ENCODE measurements at regions of chr17 and their contacts with region 1.

Region 1: DNA sequence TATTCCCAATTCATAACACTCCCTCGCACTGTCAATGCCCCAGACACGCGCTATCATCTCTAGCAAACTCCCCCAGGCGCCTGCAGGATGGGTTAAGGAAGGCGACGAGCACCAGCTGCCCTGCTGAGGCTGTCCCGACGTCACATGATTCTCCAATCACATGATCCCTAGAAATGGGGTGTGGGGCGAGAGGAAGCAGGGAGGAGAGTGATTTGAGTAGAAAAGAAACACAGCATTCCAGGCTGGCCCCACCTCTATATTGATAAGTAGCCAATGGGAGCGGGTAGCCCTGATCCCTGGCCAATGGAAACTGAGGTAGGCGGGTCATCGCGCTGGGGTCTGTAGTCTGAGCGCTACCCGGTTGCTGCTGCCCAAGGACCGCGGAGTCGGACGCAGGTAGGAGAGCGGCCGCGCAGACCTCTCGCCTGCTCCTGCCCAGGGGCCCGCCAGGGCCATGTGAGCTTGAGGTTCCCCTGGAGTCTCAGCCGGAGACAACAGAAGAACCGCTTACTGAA is at the start of gene GRN:
- DNase-seq: peak; percentile 95
- ATAC-seq: peak; percentile 99
- H3K4me3 Mint-ChIP-seq: peak within 1 kb of the TSS; percentile 85
- H3K27ac Mint-ChIP-seq: peak within 1 kb of the TSS; percentile 95
- H3K4me1 Mint-ChIP-seq: peaks cover 8% of the 10 kb centered on the region
- H3K27me3 Mint-ChIP-seq: peaks cover 20% of the 10 kb centered on the region
- CTCF ChIP-seq: no peak
- total RNA-seq, gene GRN: 177 to 185 TPM (median 185 TPM) in 3 replicates

Region 2: DNA sequence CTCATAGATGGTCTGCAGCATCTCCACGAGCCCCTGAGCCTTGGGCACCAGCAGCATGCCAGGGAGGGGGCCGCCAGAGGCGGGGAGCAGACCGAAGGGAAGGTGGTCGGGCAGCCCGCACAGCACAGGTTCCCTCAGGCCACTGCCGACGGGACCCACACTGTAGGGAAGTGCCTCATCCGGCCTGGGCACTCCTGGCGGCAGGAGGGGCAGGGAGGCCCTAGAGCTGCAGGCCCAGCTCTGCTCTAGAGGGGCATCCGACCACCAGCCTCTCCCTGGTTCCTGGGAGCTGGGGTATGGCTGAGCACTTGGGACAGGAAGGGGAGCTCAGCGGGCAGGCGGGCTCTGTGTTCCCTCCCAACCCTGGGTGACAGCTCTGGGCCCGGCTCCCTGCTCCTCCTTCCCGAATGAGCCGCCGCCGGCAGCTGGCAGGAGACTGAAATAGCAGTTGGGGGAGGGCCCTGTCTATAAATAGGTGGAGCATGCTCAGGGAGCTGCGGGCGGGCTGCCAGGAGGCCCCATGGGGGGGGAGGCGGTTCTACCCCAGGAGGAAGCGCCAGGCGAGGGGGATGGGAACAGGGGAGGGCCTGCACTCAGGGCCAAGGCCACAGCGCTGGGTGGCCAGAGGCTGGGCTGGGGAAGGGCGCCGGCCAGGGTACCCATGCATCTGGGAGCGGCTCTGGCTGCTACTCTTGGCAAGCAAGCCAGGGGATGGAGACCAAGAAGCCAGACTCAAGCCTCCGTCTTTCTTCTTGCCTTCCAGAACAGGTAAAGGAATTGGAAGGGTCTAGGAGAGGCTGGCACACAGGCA is 234.0 kb before region 1 on chr17:
- CTCF ChIA-PET with region 1: interaction called, 10 read pairs
- POLR2A ChIA-PET with region 1: no interaction called
- DNase-seq: peak; percentile 82
- ATAC-seq: peak; percentile 75
- H3K4me3 Mint-ChIP-seq: peak overlapping the region; percentile 49
- H3K27ac Mint-ChIP-seq: no peak overlapping the region
- H3K4me1 Mint-ChIP-seq: peaks cover 48% of the 10 kb centered on the region
- H3K27me3 Mint-ChIP-seq: no peaks in the 10 kb centered on the region
- CTCF ChIP-seq: no peak

Region 3: GRCh38 chr17:44199553-44200477 is 145.2 kb before region 1 on chr17 and contains the start of gene ATXN7L3:
- CTCF ChIA-PET with region 1: interaction called, 26 read pairs
- POLR2A ChIA-PET with region 1: no interaction called
- DNase-seq: peak; percentile 100
- ATAC-seq: peak; percentile 87
- H3K4me3 Mint-ChIP-seq: peak within 1 kb of the TSS; percentile 85
- H3K27ac Mint-ChIP-seq: peak within 1 kb of the TSS; percentile 98
- H3K4me1 Mint-ChIP-seq: peaks cover 24% of the 10 kb centered on the region
- H3K27me3 Mint-ChIP-seq: no peaks in the 10 kb centered on the region
- CTCF ChIP-seq: no peak
- total RNA-seq, gene ATXN7L3: 113 to 124 TPM (median 114 TPM) in 3 replicates

Region 4: GRCh38 chr17:44218344-44219107 is 126.5 kb before region 1 on chr17:
- CTCF ChIA-PET with region 1: interaction called, 18 read pairs
- POLR2A ChIA-PET with region 1: interaction called, 8 read pairs
- DNase-seq: peak; percentile 72
- ATAC-seq: peak; percentile 30
- H3K4me3 Mint-ChIP-seq: peak overlapping the region; percentile 82
- H3K27ac Mint-ChIP-seq: no peak overlapping the region
- H3K4me1 Mint-ChIP-seq: peaks cover 17% of the 10 kb centered on the region
- H3K27me3 Mint-ChIP-seq: no peaks in the 10 kb centered on the region
- CTCF ChIP-seq: peak; percentile 26; the same call in 1 of the 2 replicates

Region 5: DNA sequence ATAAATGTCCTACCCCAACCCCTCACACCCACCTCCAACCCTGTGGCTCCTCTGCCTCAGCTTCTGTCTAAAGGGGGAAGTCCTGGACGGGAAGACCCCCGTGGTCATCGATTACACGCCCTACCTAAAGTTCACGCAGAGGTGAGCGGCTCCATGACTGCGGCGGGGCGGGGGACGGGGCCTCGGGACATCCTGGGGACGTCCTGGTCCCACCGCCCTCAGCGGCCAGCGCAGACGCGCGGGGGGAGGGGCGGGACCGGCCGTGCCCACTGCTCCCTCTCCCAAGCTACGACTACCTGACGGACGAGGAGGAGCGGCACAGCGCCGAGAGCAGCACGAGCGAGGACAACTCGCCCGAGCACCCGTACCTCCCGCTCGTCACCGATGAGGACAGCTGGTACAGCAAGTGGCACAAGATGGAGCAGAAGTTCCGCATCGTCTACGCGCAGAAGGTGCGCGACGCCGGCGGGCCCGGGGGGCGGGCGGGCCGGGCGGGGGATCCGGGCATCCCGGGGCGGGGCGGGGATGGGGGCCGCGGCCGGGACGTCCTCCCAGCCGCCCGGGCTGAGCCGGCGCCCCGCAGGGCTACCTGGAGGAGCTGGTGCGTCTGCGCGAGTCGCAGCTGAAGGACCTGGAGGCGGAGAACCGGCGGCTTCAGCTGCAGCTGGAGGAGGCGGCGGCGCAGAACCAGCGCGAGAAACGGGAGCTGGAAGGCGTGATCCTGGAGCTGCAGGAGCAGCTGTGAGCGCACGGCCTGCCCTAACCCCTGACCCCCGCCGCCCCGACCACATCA is 29.9 kb before region 1 on chr17:
- CTCF ChIA-PET with region 1: interaction called, 44 read pairs
- POLR2A ChIA-PET with region 1: interaction called, 3 read pairs
- DNase-seq: peak; percentile 76
- ATAC-seq: peak; percentile 13
- H3K4me3 Mint-ChIP-seq: peak overlapping the region; percentile 79
- H3K27ac Mint-ChIP-seq: no peak overlapping the region
- H3K4me1 Mint-ChIP-seq: peaks cover 39% of the 10 kb centered on the region
- H3K27me3 Mint-ChIP-seq: peaks cover 37% of the 10 kb centered on the region
- CTCF ChIP-seq: no peak

Region 6: DNA sequence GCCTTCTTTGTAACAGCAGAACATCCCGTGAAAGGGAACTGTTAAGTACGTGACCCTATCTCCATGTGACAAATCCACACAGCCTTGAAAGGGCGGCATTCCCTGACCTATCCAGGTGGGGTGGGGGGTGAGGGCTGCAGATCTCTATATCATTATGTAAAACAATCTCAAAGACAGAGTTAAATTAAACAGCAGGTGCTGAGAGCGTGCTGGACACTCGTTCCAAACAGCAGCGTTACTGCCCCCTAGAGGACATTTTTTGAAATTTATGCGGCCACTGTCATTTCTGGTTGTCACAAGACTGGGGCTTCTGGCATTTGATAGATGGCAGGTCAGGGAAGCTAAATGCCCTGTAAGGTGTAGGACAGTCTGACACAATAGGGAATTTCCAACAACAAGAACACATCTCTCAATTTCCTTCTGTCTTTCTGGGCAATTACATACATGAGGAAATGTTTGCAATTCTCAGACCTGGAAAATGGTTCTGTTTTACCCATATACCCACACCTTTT is 13.7 kb before region 1 on chr17:
- CTCF ChIA-PET with region 1: interaction called, 78 read pairs
- POLR2A ChIA-PET with region 1: interaction called, 4 read pairs
- DNase-seq: peak; percentile 80
- ATAC-seq: peak; percentile 19
- H3K4me3 Mint-ChIP-seq: no peak overlapping the region
- H3K27ac Mint-ChIP-seq: no peak overlapping the region
- H3K4me1 Mint-ChIP-seq: peaks cover 17% of the 10 kb centered on the region
- H3K27me3 Mint-ChIP-seq: peaks cover 3% of the 10 kb centered on the region; the same call in 1 of the 2 replicates
- CTCF ChIP-seq: peak; percentile 76

Region 7: DNA sequence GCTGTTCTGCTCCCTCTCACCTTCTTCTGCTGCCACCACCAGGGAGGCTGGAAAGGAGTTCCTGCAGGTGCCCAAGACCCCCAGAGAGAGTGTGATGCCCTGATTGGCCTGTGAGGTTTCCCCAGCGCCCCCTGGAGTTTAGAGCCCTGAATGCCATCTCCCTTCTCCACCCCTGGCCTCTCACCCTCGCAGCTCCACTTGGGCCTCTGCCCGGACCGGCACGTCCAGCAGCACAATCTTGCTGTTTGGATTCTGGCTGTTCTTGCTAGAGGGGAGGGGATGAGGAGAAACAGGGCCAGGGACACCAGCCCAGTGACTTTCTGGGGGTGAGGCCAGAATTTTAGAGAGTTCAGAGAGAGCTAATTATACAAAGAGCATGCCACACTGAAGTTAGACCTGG is 31.1 kb after region 1 on chr17:
- CTCF ChIA-PET with region 1: interaction called, 19 read pairs
- POLR2A ChIA-PET with region 1: interaction called, 3 read pairs
- DNase-seq: peak; percentile 74
- ATAC-seq: peak; percentile 46
- H3K4me3 Mint-ChIP-seq: 0 out of 2 replicates have a peak overlapping the region, but pooled peaks have one; percentile 18
- H3K27ac Mint-ChIP-seq: no peak overlapping the region
- H3K4me1 Mint-ChIP-seq: peaks cover 27% of the 10 kb centered on the region
- H3K27me3 Mint-ChIP-seq: peaks cover 5% of the 10 kb centered on the region; the same call in 1 of the 2 replicates
- CTCF ChIP-seq: peak; percentile 55

Region 8: DNA sequence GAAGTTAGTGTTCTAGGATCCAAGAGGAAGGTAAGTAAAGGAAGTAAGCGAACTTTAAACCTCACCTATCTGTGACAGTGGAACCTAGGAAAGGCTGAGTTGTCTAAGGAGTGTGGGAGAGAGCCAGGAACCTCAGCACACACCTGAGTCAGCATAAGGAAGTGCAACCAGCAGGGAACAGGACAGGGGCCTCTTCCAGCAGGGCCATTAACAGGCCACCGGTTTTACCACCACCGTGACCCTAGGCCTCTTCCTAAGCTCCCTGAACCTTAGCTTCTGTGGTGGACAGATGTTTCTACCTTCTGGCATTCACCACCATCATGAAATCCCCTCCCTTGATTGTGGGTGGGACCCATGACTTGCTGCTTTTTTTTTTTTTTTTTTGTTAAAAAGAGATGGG is 184.9 kb after region 1 on chr17:
- CTCF ChIA-PET with region 1: no interaction called
- POLR2A ChIA-PET with region 1: no interaction called
- DNase-seq: no peak
- ATAC-seq: no peak
- H3K4me3 Mint-ChIP-seq: no peak overlapping the region
- H3K27ac Mint-ChIP-seq: no peak overlapping the region
- H3K4me1 Mint-ChIP-seq: peaks cover 11% of the 10 kb centered on the region
- H3K27me3 Mint-ChIP-seq: peaks cover 19% of the 10 kb centered on the region
- CTCF ChIP-seq: no peak